CD8-positive, alpha-beta memory T cell (primary cell): ENCODE measurements at regions of chr10 and their contacts with region 1.

Region 1: GRCh38 chr10:124671486-124672075 is 72.6 kb downstream of the FAM53B start:
- DNase-seq: no peak
- H3K4me3 ChIP-seq: peak overlapping the region; percentile 3
- H3K4me3 Mint-ChIP-seq: peak overlapping the region; percentile 14 to 85 (median 59)
- H3K27ac ChIP-seq: peak overlapping the region; percentile 5
- H3K27ac Mint-ChIP-seq: peak overlapping the region; percentile 76 to 97 (median 88)
- H3K4me1 ChIP-seq: peaks cover 100% of the 10 kb centered on the region
- H3K4me1 Mint-ChIP-seq: peaks cover 87 to 98% (median 95%) of the 10 kb centered on the region in 3 donors
- H3K27me3 ChIP-seq: no peaks in the 10 kb centered on the region
- H3K27me3 Mint-ChIP-seq: no peaks in the 10 kb centered on the region

Region 2: GRCh38 chr10:124657806-124658205 is 13.8 kb before region 1 on chr10:
- CTCF ChIA-PET with region 1: interaction called, 17 read pairs
- POLR2A ChIA-PET with region 1: interaction called, 3 read pairs
- DNase-seq: peak in 4 of 5 donors; percentile 39 to 77 (median 65)
- H3K4me3 ChIP-seq: no peak overlapping the region
- H3K4me3 Mint-ChIP-seq: peak overlapping the region; percentile 41 to 90 (median 80)
- H3K27ac ChIP-seq: peak overlapping the region; percentile 79
- H3K27ac Mint-ChIP-seq: peak overlapping the region; percentile 91 to 99 (median 97)
- H3K4me1 ChIP-seq: peaks cover 89% of the 10 kb centered on the region
- H3K4me1 Mint-ChIP-seq: peaks cover 87 to 95% (median 88%) of the 10 kb centered on the region in 3 donors
- H3K27me3 ChIP-seq: no peaks in the 10 kb centered on the region
- H3K27me3 Mint-ChIP-seq: peaks cover 0 to 2% of the 10 kb centered on the region in 2 donors

Region 3: DNA sequence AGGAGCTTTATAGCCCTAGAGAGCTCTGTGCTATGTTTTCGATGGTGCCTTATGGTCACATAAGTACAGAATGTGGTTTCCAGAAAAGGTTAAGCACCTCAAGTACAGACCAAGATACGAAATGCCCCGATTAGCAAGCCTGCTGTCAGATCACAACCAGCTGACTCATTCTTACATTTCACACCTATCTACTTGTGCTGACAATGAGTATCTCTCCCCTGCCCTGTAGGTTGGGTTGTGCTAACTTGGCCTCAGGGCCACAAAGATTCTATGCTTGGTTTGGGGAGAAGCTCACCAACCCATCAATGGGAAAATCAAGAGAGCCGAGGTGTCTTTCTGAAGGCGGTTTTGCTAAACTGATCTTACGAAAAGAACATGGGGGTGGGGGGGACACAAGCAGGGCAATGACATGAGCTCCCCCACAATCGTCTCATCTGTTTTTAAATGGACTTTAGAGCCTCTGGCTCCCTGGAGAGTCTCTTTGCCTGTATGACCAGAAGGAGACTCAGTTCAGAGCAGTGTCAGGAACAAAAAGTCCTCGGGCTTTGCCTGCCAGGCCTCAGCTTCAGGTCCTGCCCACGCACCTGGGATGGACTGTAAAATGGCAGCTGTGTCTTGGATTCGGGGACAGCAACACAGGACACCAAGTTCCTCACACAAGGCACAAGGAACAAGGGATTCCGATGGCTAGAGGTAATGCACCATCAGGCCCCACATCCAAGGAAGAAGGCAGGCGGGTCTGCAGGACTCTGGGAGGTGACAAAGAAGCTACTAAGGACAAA is 17.5 kb after region 1 on chr10:
- CTCF ChIA-PET with region 1: interaction called, 12 read pairs
- POLR2A ChIA-PET with region 1: interaction called, 6 read pairs
- DNase-seq: peak in 4 of 5 donors; percentile 43 to 82 (median 62)
- H3K4me3 ChIP-seq: no peak overlapping the region
- H3K4me3 Mint-ChIP-seq: peak overlapping the region; percentile 1 to 87 (median 75)
- H3K27ac ChIP-seq: peak overlapping the region; percentile 48
- H3K27ac Mint-ChIP-seq: peak overlapping the region; percentile 82 to 99 (median 96)
- H3K4me1 ChIP-seq: peaks cover 79% of the 10 kb centered on the region
- H3K4me1 Mint-ChIP-seq: peaks cover 73 to 93% (median 93%) of the 10 kb centered on the region in 3 donors
- H3K27me3 ChIP-seq: no peaks in the 10 kb centered on the region
- H3K27me3 Mint-ChIP-seq: no peaks in the 10 kb centered on the region

Region 4: GRCh38 chr10:124703778-124704427 is 32.3 kb after region 1 on chr10:
- CTCF ChIA-PET with region 1: interaction called, 12 read pairs
- POLR2A ChIA-PET with region 1: interaction called, 3 read pairs
- DNase-seq: peak in 1 of 5 donors; percentile 11
- H3K4me3 ChIP-seq: no peak overlapping the region
- H3K4me3 Mint-ChIP-seq: peak overlapping the region in 4 of 7 donors; percentile 34 to 70 (median 52)
- H3K27ac ChIP-seq: no peak overlapping the region
- H3K27ac Mint-ChIP-seq: peak overlapping the region; percentile 93 to 99 (median 98)
- H3K4me1 ChIP-seq: peaks cover 99% of the 10 kb centered on the region
- H3K4me1 Mint-ChIP-seq: peaks cover 95 to 100% (median 99%) of the 10 kb centered on the region in 3 donors
- H3K27me3 ChIP-seq: no peaks in the 10 kb centered on the region
- H3K27me3 Mint-ChIP-seq: no peaks in the 10 kb centered on the region

Region 5: GRCh38 chr10:124864421-124865193 is 193.0 kb after region 1 on chr10:
- CTCF ChIA-PET with region 1: no interaction called
- POLR2A ChIA-PET with region 1: no interaction called
- DNase-seq: no peak
- H3K4me3 ChIP-seq: no peak overlapping the region
- H3K4me3 Mint-ChIP-seq: no peak overlapping the region
- H3K27ac ChIP-seq: no peak overlapping the region
- H3K27ac Mint-ChIP-seq: no peak overlapping the region
- H3K4me1 ChIP-seq: no peaks in the 10 kb centered on the region
- H3K4me1 Mint-ChIP-seq: no peaks in the 10 kb centered on the region
- H3K27me3 ChIP-seq: no peaks in the 10 kb centered on the region
- H3K27me3 Mint-ChIP-seq: peaks cover 5 to 20% of the 10 kb centered on the region in 2 donors